AG04450 (cell line): ENCODE measurements at regions of chr12 and their contacts with region 1.

Region 1: DNA sequence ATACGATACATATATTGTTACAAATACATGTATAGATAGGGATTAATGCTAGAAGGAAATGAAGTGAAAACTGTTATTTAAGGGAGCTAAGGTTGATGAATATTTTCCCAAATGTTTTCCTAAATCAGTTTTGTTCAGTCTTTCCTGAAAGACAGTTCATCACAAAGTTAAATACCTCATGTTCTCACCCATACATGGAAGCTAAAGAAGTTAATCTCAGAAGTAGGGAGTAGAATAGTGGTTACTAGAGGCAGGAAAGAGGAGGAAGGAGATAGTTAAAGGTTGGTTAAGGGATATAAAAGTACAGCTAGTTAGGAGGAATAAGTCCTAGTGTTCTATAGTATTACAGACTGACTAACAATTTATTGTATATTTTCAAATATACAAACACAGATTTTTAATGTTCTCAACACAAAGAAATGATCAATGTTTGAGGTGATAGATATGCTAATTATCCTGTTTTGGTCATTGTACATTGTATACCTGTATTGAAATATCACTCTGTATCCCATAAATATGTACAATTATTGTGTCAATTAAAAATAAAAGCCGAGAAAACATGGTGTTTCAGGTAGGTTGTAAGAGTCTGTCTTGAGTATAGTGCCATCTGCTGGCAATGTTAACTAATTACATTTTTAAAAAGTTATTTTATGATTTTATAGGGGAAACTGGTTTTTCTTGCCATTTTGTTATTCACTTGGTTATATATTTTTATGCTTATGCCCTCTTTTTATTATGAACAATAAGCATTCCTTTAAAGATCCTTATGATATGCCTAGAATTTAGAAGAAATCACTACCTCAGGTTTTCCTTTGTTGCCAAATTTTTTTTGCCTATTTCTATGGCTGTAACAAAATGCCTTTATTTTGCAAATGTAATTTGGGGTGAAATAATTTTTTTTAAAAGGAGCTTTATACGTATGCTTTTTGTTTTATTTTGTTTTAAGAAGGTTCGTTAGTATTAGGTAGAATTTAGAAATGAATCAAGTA is 26.9 kb downstream of the ZDHHC17 start:
- DNase-seq: no peak
- H3K4me3 ChIP-seq: no peak overlapping the region
- H3K27ac ChIP-seq: no peak overlapping the region
- H3K27me3 ChIP-seq: no peaks in the 10 kb centered on the region
- CTCF ChIP-seq: peak; percentile 55

Region 2: GRCh38 chr12:76621582-76622024 is 169.3 kb before region 1 on chr12:
- CTCF ChIA-PET with region 1: interaction called, 127 read pairs
- POLR2A ChIA-PET with region 1: no interaction called
- DNase-seq: peak; percentile 36
- H3K4me3 ChIP-seq: no peak overlapping the region
- H3K27ac ChIP-seq: no peak overlapping the region
- H3K27me3 ChIP-seq: no peaks in the 10 kb centered on the region
- CTCF ChIP-seq: peak; percentile 91

Region 3: GRCh38 chr12:76777765-76778216 is 13.1 kb before region 1 on chr12:
- CTCF ChIA-PET with region 1: interaction called, 13 read pairs
- POLR2A ChIA-PET with region 1: no interaction called
- DNase-seq: no peak
- H3K4me3 ChIP-seq: no peak overlapping the region
- H3K27ac ChIP-seq: no peak overlapping the region
- H3K27me3 ChIP-seq: no peaks in the 10 kb centered on the region
- CTCF ChIP-seq: no peak